Mucosa of descending colon (tissue), 3 donors: ENCODE measurements at regions of chr18 and their contacts with region 1.

Region 1: GRCh38 chr18:44895176-44895798 is 214.6 kb downstream of the SETBP1 start:
- DNase-seq: peak in 2 of 3 donors; percentile 60 to 85
- ATAC-seq: peak; percentile 97
- H3K4me3 ChIP-seq: no peak overlapping the region
- H3K4me1 ChIP-seq: no peaks in the 10 kb centered on the region
- CTCF ChIP-seq: no peak

Region 2: GRCh38 chr18:44119607-44120006 is 775.7 kb before region 1 on chr18:
- intact Hi-C with region 1: loop called in 1 of 2 experiments (anchors 10 kb)
- DNase-seq: no peak
- ATAC-seq: peak; percentile 36
- H3K4me3 ChIP-seq: no peak overlapping the region
- H3K4me1 ChIP-seq: peaks cover 8% of the 10 kb centered on the region
- CTCF ChIP-seq: no peak

Region 3: GRCh38 chr18:44594799-44595467 is 300.4 kb before region 1 on chr18:
- intact Hi-C with region 1: no loop called
- DNase-seq: no peak
- ATAC-seq: no peak
- H3K4me3 ChIP-seq: no peak overlapping the region
- H3K4me1 ChIP-seq: no peaks in the 10 kb centered on the region
- CTCF ChIP-seq: no peak

Region 4: GRCh38 chr18:44679056-44679905 is 216.0 kb before region 1 on chr18:
- intact Hi-C with region 1: loop called in 1 of 2 experiments (anchors 10 kb)
- DNase-seq: peak; percentile 90 to 92 (median 91)
- ATAC-seq: peak; percentile 97
- H3K4me3 ChIP-seq: peak overlapping the region; percentile 41
- H3K4me1 ChIP-seq: peaks cover 4% of the 10 kb centered on the region
- CTCF ChIP-seq: peak; percentile 46

Region 5: GRCh38 chr18:44838971-44839666 is 56.2 kb before region 1 on chr18:
- intact Hi-C with region 1: no loop called
- DNase-seq: peak; percentile 72 to 79 (median 77)
- ATAC-seq: peak; percentile 90
- H3K4me3 ChIP-seq: no peak overlapping the region
- H3K4me1 ChIP-seq: peaks cover 12% of the 10 kb centered on the region
- CTCF ChIP-seq: no peak

Region 6: DNA sequence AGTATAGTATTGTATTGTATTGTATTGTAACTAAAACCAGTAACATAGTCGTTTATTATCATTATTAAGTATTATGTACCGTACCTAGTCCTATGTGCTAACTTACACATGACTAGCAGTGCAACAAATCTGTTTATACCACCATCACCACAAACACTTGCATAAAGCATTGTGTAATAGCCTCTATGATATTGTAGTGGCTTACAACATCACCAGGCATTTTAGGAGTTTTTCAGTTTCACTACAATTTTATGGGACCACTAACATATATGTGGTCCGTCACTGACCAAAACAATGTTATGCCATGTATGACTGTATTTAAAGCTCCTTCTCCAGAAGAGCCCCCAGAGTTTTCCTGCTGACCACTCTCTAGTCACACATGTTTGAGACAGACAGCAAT is 91.6 kb after region 1 on chr18:
- intact Hi-C with region 1: no loop called
- DNase-seq: no peak
- ATAC-seq: no peak
- H3K4me3 ChIP-seq: no peak overlapping the region
- H3K4me1 ChIP-seq: no peaks in the 10 kb centered on the region
- CTCF ChIP-seq: no peak